Panc1 (cell line): ENCODE measurements at regions of chr2 and their contacts with region 1.

Region 1: GRCh38 chr2:6917761-6918421 is 679 bp downstream of the RNF144A start:
- DNase-seq: no peak
- ATAC-seq: peak; percentile 80
- H3K4me3 ChIP-seq: peak overlapping the region; percentile 59 to 63
- H3K27ac ChIP-seq: no peak overlapping the region
- H3K4me1 ChIP-seq: no peaks in the 10 kb centered on the region; the same call in 1 of the 2 replicates
- H3K27me3 ChIP-seq: no peaks in the 10 kb centered on the region
- CTCF ChIP-seq: no peak

Region 2: GRCh38 chr2:7037340-7038333 is 119.7 kb after region 1 on chr2:
- CTCF ChIA-PET with region 1: no interaction called
- POLR2A ChIA-PET with region 1: no interaction called
- in situ Hi-C with region 1: no loop called
- intact Hi-C with region 1: loop called (anchors 5 kb)
- DNase-seq: peak; percentile 41
- ATAC-seq: peak; percentile 86
- H3K4me3 ChIP-seq: no peak overlapping the region
- H3K27ac ChIP-seq: no peak overlapping the region
- H3K4me1 ChIP-seq: no peaks in the 10 kb centered on the region
- H3K27me3 ChIP-seq: no peaks in the 10 kb centered on the region
- CTCF ChIP-seq: peak; percentile 82

Region 3: GRCh38 chr2:7348761-7349160 is 430.9 kb after region 1 on chr2:
- CTCF ChIA-PET with region 1: no interaction called
- POLR2A ChIA-PET with region 1: no interaction called
- in situ Hi-C with region 1: no loop called
- intact Hi-C with region 1: no loop called
- DNase-seq: no peak
- ATAC-seq: no peak
- H3K4me3 ChIP-seq: no peak overlapping the region
- H3K27ac ChIP-seq: no peak overlapping the region
- H3K4me1 ChIP-seq: no peaks in the 10 kb centered on the region
- H3K27me3 ChIP-seq: no peaks in the 10 kb centered on the region
- CTCF ChIP-seq: no peak

Region 4: GRCh38 chr2:8855010-8855409 is 1937.1 kb after region 1 on chr2:
- CTCF ChIA-PET with region 1: no interaction called
- POLR2A ChIA-PET with region 1: interaction called, 10 read pairs
- in situ Hi-C with region 1: no loop called
- intact Hi-C with region 1: no loop called
- DNase-seq: no peak
- ATAC-seq: no peak
- H3K4me3 ChIP-seq: no peak overlapping the region
- H3K27ac ChIP-seq: no peak overlapping the region
- H3K4me1 ChIP-seq: no peaks in the 10 kb centered on the region
- H3K27me3 ChIP-seq: no peaks in the 10 kb centered on the region
- CTCF ChIP-seq: no peak